ENCODE measurements at regions of chr15 and their contacts with region 1.

Region 1: DNA sequence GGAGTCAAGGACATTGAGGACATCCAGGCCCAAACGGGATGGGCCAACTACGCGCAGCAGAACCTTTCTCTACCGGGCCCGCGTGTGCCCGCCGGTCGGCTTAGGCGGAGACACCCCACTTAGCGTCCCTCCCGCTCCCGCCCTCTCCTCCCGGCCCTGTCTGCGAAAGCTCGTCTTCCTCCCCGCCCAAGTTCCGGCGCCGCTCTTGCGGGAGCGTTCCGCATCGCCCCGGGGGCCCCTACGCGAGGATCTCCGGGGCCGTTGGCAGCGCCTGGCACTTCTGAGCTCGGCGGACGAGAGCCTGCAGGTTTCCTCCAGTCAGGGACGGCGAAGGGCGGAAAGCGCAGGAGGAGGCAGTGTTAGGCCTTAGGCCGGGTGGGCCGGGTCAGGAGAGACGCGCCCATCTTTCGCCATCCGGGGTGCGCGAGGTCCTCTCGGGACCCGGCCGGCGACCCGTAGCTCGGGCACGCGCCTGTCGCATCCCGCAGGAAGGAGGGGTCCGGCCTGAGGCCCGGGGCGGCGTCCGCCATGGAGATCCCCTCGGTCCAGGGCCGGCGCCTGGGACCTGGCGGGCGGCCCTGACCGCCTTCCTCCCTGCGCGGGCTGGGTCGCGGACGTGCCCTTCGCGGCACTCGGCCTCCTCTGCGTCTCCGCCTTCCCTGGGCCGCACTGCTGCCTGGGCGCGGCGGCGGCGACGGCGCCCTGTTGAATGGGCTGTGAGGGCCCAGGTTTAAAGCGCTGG is at the start of gene FEM1B:
- DNase-seq: peak; percentile 73 to 96 (median 86)
- ATAC-seq: peak; percentile 76
- H3K4me3 ChIP-seq: peak within 1 kb of the TSS; percentile 90 to 93
- H3K4me3 Mint-ChIP-seq: peak within 1 kb of the TSS; percentile 98
- H3K27ac ChIP-seq: peak within 1 kb of the TSS; percentile 92 to 98
- H3K27ac Mint-ChIP-seq: peak within 1 kb of the TSS; percentile 98
- H3K4me1 ChIP-seq: peaks cover 47% of the 10 kb centered on the region
- H3K4me1 Mint-ChIP-seq: peaks cover 60% of the 10 kb centered on the region
- H3K27me3 ChIP-seq: no peaks in the 10 kb centered on the region
- H3K27me3 Mint-ChIP-seq: no peaks in the 10 kb centered on the region
- CTCF ChIP-seq: no peak
- total RNA-seq, gene FEM1B: 89.7 to 90.6 TPM

Region 2: GRCh38 chr15:67254238-67255175 is 1023.3 kb before region 1 on chr15 and contains the starts of genes AAGAB and IQCH:
- CTCF ChIA-PET with region 1: no interaction called
- POLR2A ChIA-PET with region 1: no interaction called
- intact Hi-C with region 1: loop called in 1 of 2 experiments (anchors 5 kb)
- DNase-seq: peak; percentile 93 to 99 (median 97)
- ATAC-seq: peak; percentile 93
- H3K4me3 ChIP-seq: peak within 1 kb of the TSS; percentile 78 to 92
- H3K4me3 Mint-ChIP-seq: peak within 1 kb of the TSS; percentile 98
- H3K27ac ChIP-seq: peak within 1 kb of the TSS; percentile 79 to 86
- H3K27ac Mint-ChIP-seq: peak within 1 kb of the TSS; percentile 98
- H3K4me1 ChIP-seq: peaks cover 13% of the 10 kb centered on the region
- H3K4me1 Mint-ChIP-seq: peaks cover 44% of the 10 kb centered on the region
- H3K27me3 ChIP-seq: peaks cover 0 to 3% of the 10 kb centered on the region in 2 experiments
- H3K27me3 Mint-ChIP-seq: no peaks in the 10 kb centered on the region
- CTCF ChIP-seq: no peak
- total RNA-seq, gene AAGAB: 17.0 to 18.0 TPM
- total RNA-seq, gene IQCH: 0.39 to 0.60 TPM

Region 3: DNA sequence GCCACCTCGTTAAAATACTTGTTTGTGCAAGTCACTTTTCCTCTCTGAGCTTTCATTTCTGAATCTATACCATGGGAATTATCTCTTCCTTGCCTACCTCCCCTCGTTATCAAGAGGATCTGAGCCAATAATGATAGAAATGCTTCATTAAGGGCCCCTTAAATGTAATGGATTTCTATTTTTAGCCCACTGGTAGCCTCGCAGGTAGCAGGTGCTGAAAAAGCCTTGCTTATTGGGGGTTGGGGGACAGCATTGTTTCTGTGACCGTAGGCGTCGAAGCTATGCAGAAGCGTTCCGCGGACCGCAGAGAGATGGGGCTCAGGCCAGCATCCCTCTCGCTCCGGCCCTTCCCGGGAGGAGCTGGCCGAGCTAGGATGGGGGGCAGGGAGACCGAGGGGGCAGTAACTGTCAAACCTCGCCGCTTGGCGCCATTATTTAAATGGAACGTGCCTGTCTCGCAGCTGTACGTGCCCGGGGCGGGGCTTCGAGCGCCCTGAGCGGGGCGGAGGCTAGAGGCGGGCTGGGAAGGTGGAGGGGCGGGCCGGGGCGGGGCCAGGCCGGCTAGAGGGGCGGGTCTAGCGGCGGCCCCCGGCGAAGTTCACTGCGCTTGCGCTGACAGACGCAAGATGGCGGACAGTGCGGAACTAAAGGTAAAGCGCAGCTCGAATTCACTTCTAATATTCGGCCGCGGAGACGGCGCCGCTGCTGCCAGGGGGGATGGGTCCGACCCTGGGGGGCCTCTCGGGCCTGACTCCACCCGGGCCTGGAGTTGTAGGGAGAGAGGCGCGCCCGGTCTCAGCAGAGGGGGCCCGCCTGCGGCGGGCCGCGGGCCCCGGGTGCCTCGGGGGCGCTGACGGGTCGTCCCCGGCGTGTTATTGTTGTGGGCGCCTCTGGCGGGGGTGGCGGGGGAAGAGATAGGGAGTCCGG is 223.8 kb before region 1 on chr15 and contains the start of gene PIAS1:
- CTCF ChIA-PET with region 1: no interaction called
- POLR2A ChIA-PET with region 1: interaction called, 15 read pairs
- intact Hi-C with region 1: loop called (anchors 1 kb)
- DNase-seq: peak; percentile 87 to 96 (median 93)
- ATAC-seq: peak; percentile 90
- H3K4me3 ChIP-seq: peak within 1 kb of the TSS; percentile 84 to 96
- H3K4me3 Mint-ChIP-seq: peak within 1 kb of the TSS; percentile 95
- H3K27ac ChIP-seq: peak within 1 kb of the TSS; percentile 79 to 85
- H3K27ac Mint-ChIP-seq: peak within 1 kb of the TSS; percentile 96
- H3K4me1 ChIP-seq: peaks cover 37% of the 10 kb centered on the region
- H3K4me1 Mint-ChIP-seq: peaks cover 47% of the 10 kb centered on the region
- H3K27me3 ChIP-seq: no peaks in the 10 kb centered on the region
- H3K27me3 Mint-ChIP-seq: peaks cover 2% of the 10 kb centered on the region
- CTCF ChIP-seq: no peak
- total RNA-seq, gene PIAS1: 73.9 to 78.5 TPM

Region 4: DNA sequence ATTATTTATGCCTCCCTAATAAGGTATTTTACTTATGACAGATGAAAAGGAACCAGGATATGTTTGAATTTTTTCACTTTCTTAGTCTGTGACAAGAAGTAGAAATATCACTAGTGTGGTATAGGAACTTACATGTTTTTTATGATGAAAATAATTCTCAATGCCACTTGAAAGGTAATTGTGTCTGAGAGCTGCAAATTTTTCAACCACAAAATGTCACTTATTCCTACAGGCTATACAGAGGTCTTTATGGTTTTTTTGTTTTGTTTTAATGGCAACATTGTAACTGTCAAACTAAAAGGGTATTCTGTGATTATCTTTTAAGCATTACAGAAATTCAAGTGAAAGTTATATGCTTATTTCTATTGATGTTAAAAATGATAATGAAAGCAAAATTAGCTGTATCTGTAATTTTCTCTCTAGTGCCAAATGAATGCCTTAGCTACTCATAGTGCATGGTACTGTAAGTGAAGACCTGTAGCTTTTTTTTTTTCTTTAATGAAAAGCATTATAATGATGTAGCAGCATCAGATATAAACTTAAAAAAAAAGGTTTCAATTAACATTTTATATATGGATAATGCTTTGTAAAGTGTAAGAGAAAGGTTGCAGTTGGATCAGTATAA is 14.5 kb after region 1 on chr15:
- CTCF ChIA-PET with region 1: interaction called, 6 read pairs
- POLR2A ChIA-PET with region 1: interaction called, 26 read pairs
- intact Hi-C with region 1: no loop called
- DNase-seq: peak in 1 of 9 experiments; percentile 29
- ATAC-seq: peak; percentile 48
- H3K4me3 ChIP-seq: no peak overlapping the region
- H3K4me3 Mint-ChIP-seq: no peak overlapping the region
- H3K27ac ChIP-seq: no peak overlapping the region
- H3K27ac Mint-ChIP-seq: peak overlapping the region; percentile 33
- H3K4me1 ChIP-seq: peaks cover 20% of the 10 kb centered on the region
- H3K4me1 Mint-ChIP-seq: peaks cover 67% of the 10 kb centered on the region
- H3K27me3 ChIP-seq: no peaks in the 10 kb centered on the region
- H3K27me3 Mint-ChIP-seq: no peaks in the 10 kb centered on the region
- CTCF ChIP-seq: no peak

Region 5: GRCh38 chr15:68820295-68821189 is 542.8 kb after region 1 on chr15 and contains the start of gene ANP32A:
- CTCF ChIA-PET with region 1: no interaction called
- POLR2A ChIA-PET with region 1: interaction called, 5 read pairs
- intact Hi-C with region 1: loop called (anchors 2 to 10 kb)
- DNase-seq: peak; percentile 96 to 99 (median 97)
- ATAC-seq: peak; percentile 62
- H3K4me3 ChIP-seq: peak within 1 kb of the TSS; percentile 81 to 98
- H3K4me3 Mint-ChIP-seq: peak within 1 kb of the TSS; percentile 95
- H3K27ac ChIP-seq: peak within 1 kb of the TSS; percentile 59 to 74
- H3K27ac Mint-ChIP-seq: peak within 1 kb of the TSS; percentile 97
- H3K4me1 ChIP-seq: peaks cover 28% of the 10 kb centered on the region
- H3K4me1 Mint-ChIP-seq: peaks cover 31% of the 10 kb centered on the region
- H3K27me3 ChIP-seq: no peaks in the 10 kb centered on the region
- H3K27me3 Mint-ChIP-seq: no peaks in the 10 kb centered on the region
- CTCF ChIP-seq: no peak
- total RNA-seq, gene ANP32A: 47.6 to 51.9 TPM

Measured in CD8-positive, alpha-beta T cell (primary cell).